ENCODE measurements at regions of chr19 and their contacts with region 1.

Region 1: DNA sequence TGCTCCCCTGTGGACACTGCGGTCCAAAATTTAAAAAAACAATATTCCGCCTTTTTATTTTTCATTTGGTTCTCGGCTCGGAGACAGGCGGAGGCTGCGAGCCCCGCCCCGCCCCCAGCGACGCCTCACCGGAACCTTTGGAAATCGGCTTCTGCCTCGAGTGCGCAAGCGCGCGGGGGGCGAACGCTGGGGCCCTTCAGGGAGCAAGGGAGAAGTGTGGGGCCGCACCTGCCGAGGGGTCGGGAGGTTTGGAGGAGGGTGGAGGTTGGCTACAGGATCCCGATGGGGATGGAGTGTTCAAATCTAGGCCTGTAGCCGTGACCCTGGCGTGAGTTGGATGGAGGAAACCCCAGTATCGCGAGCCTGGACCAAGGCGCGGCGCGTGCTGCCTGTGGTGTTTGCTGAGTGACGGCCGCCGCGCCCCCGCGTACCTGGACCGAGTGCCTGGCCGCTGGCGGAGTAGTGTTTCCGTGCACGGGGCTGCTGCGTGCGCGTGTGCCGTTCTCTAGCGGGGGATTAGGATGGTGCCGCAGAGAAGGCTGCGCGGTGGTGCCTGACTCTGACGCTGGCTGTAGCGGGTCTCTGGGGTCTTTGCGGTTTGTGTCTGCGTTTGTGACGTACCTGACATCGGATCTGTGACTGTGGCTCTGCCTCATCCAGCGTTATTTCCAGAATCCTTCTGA is 565 bp upstream of the ZFP30 start:
- DNase-seq: peak; percentile 91
- H3K4me3 ChIP-seq: peak overlapping the region; percentile 72 to 83 (median 78)
- H3K27ac ChIP-seq: peak overlapping the region; percentile 91 to 94 (median 94)
- H3K4me1 ChIP-seq: peaks cover 2 to 25% (median 19%) of the 10 kb centered on the region in 4 donors
- H3K27me3 ChIP-seq: no peaks in the 10 kb centered on the region
- CTCF ChIP-seq: no peak
- EP300 ChIP-seq: no peak
- POLR2A ChIP-seq: peak in 1 of 2 donors; percentile 4

Region 2: DNA sequence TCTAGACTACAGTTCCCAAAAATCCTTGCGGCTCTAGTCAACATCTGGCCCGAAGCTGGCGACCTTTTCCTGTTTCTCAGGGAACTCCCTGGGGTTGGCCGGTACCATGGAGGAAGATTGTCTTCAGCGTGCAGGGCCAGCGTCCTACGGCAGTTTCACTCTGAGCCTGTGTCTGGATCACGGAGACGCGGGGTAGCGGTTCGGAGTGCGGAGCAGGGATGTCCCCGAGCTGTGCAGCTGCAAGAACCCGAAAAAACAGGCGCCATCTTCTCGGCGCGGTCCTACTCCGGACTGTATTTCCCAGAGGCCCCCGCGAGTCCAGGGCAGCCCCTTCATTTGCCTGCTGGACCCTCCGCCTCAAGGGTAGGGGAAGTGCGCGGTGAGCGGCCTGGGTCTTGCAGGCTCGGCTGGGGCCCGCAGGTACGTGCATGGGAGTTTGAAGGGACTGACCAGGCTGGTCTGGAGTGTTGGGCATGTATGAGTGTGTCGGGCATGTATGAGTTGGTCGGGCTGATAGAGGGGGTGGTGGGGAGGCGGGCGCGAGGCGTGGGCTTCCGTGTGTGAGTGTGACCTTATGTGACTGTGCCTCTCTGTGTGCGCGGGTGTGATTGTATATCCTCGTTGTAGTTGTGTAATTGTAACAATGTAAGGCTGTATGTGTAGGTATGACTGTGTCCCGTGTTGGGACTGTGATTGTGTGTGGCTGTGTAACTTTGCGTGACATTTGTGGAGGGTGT is 437.8 kb before region 1 on chr19 and contains the start of gene ZNF383:
- intact Hi-C with region 1: loop called (anchors 10 kb)
- DNase-seq: peak; percentile 88
- H3K4me3 ChIP-seq: peak within 1 kb of the TSS; percentile 71 to 91 (median 82)
- H3K27ac ChIP-seq: peak within 1 kb of the TSS; percentile 86 to 95 (median 93)
- H3K4me1 ChIP-seq: peaks cover 0 to 16% (median 11%) of the 10 kb centered on the region in 4 donors
- H3K27me3 ChIP-seq: no peaks in the 10 kb centered on the region
- CTCF ChIP-seq: no peak
- EP300 ChIP-seq: no peak
- POLR2A ChIP-seq: peak; percentile 12 to 37
- total RNA-seq, gene ZNF383: 10.9 to 19.7 (median 13.0) TPM

Region 3: DNA sequence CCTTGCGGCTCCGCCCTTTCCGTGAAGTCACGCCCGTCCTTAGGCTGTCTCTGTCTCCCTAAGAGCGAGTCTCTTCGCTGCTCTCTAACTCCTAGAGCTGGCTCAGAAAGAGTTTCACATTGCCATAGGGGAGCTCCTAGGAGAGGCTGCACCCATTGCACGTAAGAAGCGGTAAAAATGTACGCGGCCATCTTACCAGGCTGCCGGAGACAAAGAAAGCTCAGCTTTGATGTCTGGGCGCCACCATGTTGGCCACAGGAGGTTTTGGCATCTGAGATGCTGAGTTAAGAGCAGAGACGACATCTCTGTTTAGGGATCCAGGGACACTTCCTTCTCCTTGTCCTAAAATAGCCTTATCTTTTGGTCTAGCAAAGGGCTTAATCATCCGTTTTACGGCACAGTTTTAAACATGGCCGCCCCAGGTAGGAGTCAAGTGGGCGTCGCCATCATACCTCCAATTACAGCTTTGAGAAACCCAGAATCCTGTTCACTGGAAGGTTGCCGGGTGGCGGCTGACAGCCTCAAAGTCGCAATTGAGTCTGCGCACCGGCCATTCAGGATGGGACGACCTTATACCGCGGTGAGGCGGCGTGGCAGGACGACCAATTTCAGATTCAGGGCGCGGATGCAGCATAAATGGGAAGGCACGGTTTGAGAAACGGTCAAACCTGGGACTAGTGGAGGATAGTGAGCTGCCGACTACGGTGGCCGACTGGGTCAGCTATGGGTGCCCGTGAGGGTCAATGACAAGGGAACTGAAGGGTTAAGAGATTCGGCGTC is 149.3 kb before region 1 on chr19 and contains the start of gene ZNF793:
- intact Hi-C with region 1: loop called (anchors 5 kb)
- DNase-seq: peak; percentile 90
- H3K4me3 ChIP-seq: peak within 1 kb of the TSS; percentile 61 to 71 (median 67)
- H3K27ac ChIP-seq: peak within 1 kb of the TSS; percentile 88 to 95 (median 92)
- H3K4me1 ChIP-seq: peaks cover 0 to 15% (median 9%) of the 10 kb centered on the region in 4 donors
- H3K27me3 ChIP-seq: no peaks in the 10 kb centered on the region
- CTCF ChIP-seq: no peak
- EP300 ChIP-seq: no peak
- POLR2A ChIP-seq: peak in 1 of 2 donors; percentile 47
- total RNA-seq, gene ZNF793: 2.9 to 6.1 (median 5.4) TPM

Region 4: GRCh38 chr19:37594304-37594981 is 61.4 kb before region 1 on chr19 and contains the starts of genes ZNF540 and ZNF571:
- intact Hi-C with region 1: loop called (anchors 1 kb)
- DNase-seq: peak; percentile 97
- H3K4me3 ChIP-seq: peak within 1 kb of the TSS; percentile 53 to 88 (median 69)
- H3K27ac ChIP-seq: peak within 1 kb of the TSS; percentile 90 to 92 (median 92)
- H3K4me1 ChIP-seq: peaks cover 0 to 18% (median 17%) of the 10 kb centered on the region in 4 donors
- H3K27me3 ChIP-seq: no peaks in the 10 kb centered on the region
- CTCF ChIP-seq: no peak
- EP300 ChIP-seq: peak in 1 of 4 donors; percentile 88
- POLR2A ChIP-seq: peak; percentile 57 to 64
- total RNA-seq, gene ZNF540: 6.4 to 8.0 (median 7.1) TPM
- total RNA-seq, gene ZNF571: 3.1 to 11.4 (median 5.2) TPM

Region 5: GRCh38 chr19:37691881-37692504 is 36.2 kb after region 1 on chr19:
- intact Hi-C with region 1: loop called (anchors 2 kb)
- DNase-seq: peak; percentile 90
- H3K4me3 ChIP-seq: peak overlapping the region; percentile 59 to 63 (median 62)
- H3K27ac ChIP-seq: peak overlapping the region; percentile 82 to 88 (median 85)
- H3K4me1 ChIP-seq: peaks cover 0 to 9% (median 6%) of the 10 kb centered on the region in 4 donors
- H3K27me3 ChIP-seq: no peaks in the 10 kb centered on the region
- CTCF ChIP-seq: no peak
- EP300 ChIP-seq: no peak
- POLR2A ChIP-seq: peak in 1 of 2 donors; percentile 32

Region 6: DNA sequence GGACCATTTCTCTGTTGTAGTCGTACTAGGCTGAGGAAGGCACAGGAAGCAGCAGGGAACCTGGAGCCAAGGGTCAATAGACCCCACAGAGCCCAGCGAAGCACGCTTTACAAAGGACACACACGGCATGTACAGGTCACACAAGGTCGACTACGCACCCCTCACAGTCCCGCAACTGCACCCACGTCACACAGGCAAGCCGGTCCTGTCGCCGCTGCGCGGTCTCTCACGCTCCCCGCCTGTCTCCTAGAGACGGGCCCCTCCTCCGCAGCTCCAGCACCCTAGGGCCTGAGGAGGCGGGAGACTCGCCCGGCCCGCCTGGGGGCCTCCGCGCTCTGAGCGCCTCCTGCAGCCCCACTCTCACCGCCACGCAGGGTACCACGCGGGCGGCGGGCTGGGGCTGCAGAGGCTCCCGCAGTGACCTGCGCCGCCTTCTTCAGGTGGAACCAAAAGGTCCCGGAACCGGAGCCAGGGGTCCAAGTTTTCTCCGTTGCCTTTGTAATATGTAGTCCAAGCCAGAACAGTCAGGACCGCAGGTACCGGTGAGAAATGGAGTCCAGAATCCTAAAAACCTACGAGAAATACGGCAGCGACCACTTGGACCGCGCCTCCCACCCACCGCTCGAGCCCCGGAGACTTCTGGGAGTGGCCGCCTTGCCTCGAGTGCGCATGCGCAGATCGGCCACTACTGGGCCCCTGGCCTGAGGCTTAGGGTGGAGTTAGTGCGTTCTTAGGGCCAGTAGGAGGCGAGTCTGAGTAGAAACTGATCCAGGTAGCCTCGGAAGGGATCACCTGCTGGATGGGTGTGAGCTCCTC is 63.5 kb after region 1 on chr19 and contains the start of gene ZNF607:
- intact Hi-C with region 1: loop called (anchors 1 kb)
- DNase-seq: peak; percentile 92
- H3K4me3 ChIP-seq: peak within 1 kb of the TSS; percentile 78 to 97 (median 94)
- H3K27ac ChIP-seq: peak within 1 kb of the TSS; percentile 84 to 92 (median 87)
- H3K4me1 ChIP-seq: peaks cover 0 to 15% (median 11%) of the 10 kb centered on the region in 4 donors
- H3K27me3 ChIP-seq: no peaks in the 10 kb centered on the region
- CTCF ChIP-seq: peak; percentile 23 to 55 (median 50)
- EP300 ChIP-seq: no peak
- POLR2A ChIP-seq: peak; percentile 38 to 60
- total RNA-seq, gene ZNF607: 3.7 to 7.2 (median 4.8) TPM

Region 7: DNA sequence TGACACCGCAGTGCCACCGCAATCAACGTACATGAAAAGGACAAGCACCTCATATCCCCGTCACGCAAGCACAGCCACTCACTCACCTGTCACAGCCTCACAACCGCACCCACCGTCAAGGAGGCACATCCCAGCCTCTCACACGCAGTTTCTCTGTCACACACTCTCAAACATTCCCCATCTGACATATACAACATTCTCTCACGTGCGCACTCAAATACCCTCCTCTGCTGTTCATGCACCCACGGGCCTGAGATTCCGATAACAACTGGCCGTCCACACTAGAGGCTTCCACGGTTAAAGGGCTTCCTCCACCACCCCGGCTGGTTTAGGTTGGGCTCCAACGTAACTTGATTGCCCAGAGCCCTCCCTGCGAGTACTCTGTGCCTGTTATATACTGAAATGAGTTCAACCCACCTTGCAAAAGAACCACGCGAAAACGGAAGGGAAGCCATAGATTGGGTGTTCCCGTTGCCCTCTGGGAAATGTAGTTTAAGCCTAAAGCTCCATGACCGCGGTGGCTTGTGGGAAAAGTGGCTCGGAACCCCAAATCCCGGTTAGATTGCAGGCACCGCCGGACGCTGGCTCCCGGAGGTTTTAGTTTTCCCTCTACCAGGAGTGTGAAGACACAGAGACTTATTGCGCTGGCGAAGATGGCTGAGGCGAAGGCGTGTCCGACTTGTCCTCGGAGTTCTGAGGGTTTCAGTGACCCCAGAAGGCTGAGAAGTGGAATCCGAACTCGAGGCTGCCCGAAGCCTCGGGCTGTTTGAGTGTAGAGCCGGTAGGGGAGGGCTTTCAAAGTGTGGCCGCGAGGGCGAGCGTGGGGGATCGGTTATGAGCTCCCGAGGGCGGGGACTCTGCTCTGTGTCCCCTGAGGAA is 123.5 kb after region 1 on chr19 and contains the start of gene ZNF573:
- intact Hi-C with region 1: loop called (anchors 1 kb)
- DNase-seq: peak; percentile 87
- H3K4me3 ChIP-seq: peak within 1 kb of the TSS; percentile 52 to 68 (median 66)
- H3K27ac ChIP-seq: peak within 1 kb of the TSS; percentile 82 to 91 (median 86)
- H3K4me1 ChIP-seq: peaks cover 0 to 21% (median 5%) of the 10 kb centered on the region in 4 donors
- H3K27me3 ChIP-seq: no peaks in the 10 kb centered on the region
- CTCF ChIP-seq: peak in 3 of 4 experiments; percentile 19 to 32 (median 31)
- EP300 ChIP-seq: no peak
- POLR2A ChIP-seq: peak; percentile 21 to 40
- total RNA-seq, gene ZNF573: 6.8 to 9.7 (median 7.6) TPM